ENCODE measurements at regions of chr2 and their contacts with region 1.

Region 1: DNA sequence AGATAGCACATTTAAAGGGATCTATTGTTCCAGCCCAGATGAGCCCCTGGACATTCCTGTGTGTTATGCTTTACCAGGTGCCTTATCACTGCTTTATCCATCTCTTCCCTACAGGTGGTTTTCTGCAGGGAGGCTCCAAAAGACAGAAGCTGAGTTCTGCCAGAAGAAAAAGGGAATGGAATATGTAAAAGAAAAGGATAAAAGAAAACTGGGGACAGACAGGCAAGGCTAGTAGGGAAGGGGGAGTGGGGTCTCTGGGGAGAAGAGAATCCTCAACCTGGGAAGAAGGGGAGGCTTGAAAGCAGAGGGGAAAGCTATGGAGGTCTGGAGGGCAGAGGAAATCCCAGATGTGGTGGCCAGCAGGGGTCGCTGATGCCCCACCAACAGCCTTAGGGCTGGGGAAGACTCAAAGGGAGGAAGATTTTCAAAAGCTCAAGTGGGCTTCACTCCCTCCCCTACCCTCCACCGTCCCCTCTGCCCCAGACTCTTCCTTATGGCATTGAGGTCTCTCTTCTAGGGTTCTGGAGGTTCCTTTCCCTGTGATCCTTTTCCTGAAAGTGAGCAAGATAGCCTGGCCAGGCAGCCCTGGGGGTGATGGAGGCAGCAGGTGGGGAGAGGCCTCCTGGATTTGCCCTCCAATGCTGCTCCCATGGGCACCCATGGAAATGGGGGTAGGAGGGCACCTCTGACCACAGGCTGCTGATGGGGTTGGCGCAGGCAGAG is 178.1 kb upstream of the PKDCC start:
- DNase-seq: peak; percentile 33 to 93
- H3K4me3 ChIP-seq: no peak overlapping the region
- H3K27ac ChIP-seq: no peak overlapping the region
- H3K4me1 ChIP-seq: peaks cover 4 to 18% (median 8%) of the 10 kb centered on the region in 4 experiments; a peak in 6 of 7 replicates
- H3K27me3 ChIP-seq: no peaks in the 10 kb centered on the region
- CTCF ChIP-seq: peak; percentile 87 to 94 (median 90)
- EP300 ChIP-seq: no peak
- POLR2A ChIP-seq: no peak
- RAD21 ChIP-seq: peak; percentile 98 to 99

Region 2: GRCh38 chr2:41743324-41743723 is 126.4 kb before region 1 on chr2:
- CTCF ChIA-PET with region 1: no interaction called
- POLR2A ChIA-PET with region 1: no interaction called
- DNase-seq: no peak
- H3K4me3 ChIP-seq: no peak overlapping the region
- H3K27ac ChIP-seq: no peak overlapping the region
- H3K4me1 ChIP-seq: no peaks in the 10 kb centered on the region
- H3K27me3 ChIP-seq: no peaks in the 10 kb centered on the region
- CTCF ChIP-seq: no peak
- EP300 ChIP-seq: no peak
- POLR2A ChIP-seq: no peak
- RAD21 ChIP-seq: no peak

Region 3: DNA sequence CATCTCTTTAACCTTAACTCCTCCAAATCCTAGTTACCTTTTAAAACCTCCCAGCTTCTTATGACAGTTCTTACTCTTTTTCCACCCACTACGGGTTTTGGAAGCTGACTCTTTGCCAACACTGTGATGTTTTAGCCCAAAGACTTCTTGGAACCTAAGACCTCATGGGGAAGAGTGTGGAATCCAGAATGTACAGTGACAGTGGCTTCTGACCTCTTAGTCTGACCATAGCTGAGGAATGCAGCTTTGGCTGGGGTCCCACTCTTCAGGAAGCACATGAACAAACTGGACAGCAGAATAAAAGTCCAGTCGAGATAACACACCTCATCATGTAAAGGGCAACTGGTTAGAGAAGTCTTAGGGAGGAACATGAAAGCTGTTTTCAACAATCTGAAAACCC is 17.1 kb after region 1 on chr2:
- CTCF ChIA-PET with region 1: interaction called, 41 read pairs
- POLR2A ChIA-PET with region 1: no interaction called
- DNase-seq: no peak
- H3K4me3 ChIP-seq: no peak overlapping the region
- H3K27ac ChIP-seq: no peak overlapping the region
- H3K4me1 ChIP-seq: no peaks in the 10 kb centered on the region
- H3K27me3 ChIP-seq: no peaks in the 10 kb centered on the region
- CTCF ChIP-seq: no peak
- EP300 ChIP-seq: no peak
- POLR2A ChIP-seq: no peak
- RAD21 ChIP-seq: no peak

Region 4: GRCh38 chr2:41947701-41948396 is 78.1 kb after region 1 on chr2:
- CTCF ChIA-PET with region 1: interaction called, 53 read pairs
- POLR2A ChIA-PET with region 1: no interaction called
- DNase-seq: peak in 1 of 2 experiments; percentile 66
- H3K4me3 ChIP-seq: peak overlapping the region in 2 of 4 experiments; percentile 24 to 36; a peak in 4 of 8 replicates
- H3K27ac ChIP-seq: peak overlapping the region; percentile 51; the same call in 1 of the 2 replicates
- H3K4me1 ChIP-seq: peaks cover 19 to 31% (median 23%) of the 10 kb centered on the region in 4 experiments; a peak in 6 of 7 replicates
- H3K27me3 ChIP-seq: no peaks in the 10 kb centered on the region
- CTCF ChIP-seq: no peak
- EP300 ChIP-seq: no peak
- POLR2A ChIP-seq: no peak
- RAD21 ChIP-seq: peak in 1 of 2 experiments; percentile 4; a peak in 1 of 4 replicates

Region 5: DNA sequence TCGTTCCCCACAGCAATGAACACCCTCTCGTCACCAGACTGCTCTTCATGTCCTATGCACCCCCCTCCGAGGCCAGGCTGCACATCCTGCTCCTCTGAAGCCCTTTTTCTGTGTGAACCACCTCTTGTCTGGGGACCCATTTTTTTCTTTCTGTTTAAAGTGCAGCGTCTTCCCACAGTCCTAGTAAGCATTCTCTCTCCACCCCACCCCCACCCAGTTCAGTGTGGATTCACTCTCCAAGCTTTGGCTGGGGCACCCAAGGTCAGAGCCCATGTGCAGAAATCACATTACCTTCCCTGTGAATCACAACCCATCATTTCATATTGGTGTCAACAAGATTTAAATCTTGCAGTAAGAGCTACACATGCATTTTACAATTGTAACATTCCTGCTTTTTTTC is 151.8 kb after region 1 on chr2:
- CTCF ChIA-PET with region 1: interaction called, 15 read pairs
- POLR2A ChIA-PET with region 1: no interaction called
- DNase-seq: no peak
- H3K4me3 ChIP-seq: no peak overlapping the region
- H3K27ac ChIP-seq: no peak overlapping the region
- H3K4me1 ChIP-seq: peaks cover 3 to 9% (median 6%) of the 10 kb centered on the region in 4 experiments; a peak in 6 of 7 replicates
- H3K27me3 ChIP-seq: no peaks in the 10 kb centered on the region
- CTCF ChIP-seq: no peak
- EP300 ChIP-seq: no peak
- POLR2A ChIP-seq: no peak
- RAD21 ChIP-seq: no peak

Region 6: DNA sequence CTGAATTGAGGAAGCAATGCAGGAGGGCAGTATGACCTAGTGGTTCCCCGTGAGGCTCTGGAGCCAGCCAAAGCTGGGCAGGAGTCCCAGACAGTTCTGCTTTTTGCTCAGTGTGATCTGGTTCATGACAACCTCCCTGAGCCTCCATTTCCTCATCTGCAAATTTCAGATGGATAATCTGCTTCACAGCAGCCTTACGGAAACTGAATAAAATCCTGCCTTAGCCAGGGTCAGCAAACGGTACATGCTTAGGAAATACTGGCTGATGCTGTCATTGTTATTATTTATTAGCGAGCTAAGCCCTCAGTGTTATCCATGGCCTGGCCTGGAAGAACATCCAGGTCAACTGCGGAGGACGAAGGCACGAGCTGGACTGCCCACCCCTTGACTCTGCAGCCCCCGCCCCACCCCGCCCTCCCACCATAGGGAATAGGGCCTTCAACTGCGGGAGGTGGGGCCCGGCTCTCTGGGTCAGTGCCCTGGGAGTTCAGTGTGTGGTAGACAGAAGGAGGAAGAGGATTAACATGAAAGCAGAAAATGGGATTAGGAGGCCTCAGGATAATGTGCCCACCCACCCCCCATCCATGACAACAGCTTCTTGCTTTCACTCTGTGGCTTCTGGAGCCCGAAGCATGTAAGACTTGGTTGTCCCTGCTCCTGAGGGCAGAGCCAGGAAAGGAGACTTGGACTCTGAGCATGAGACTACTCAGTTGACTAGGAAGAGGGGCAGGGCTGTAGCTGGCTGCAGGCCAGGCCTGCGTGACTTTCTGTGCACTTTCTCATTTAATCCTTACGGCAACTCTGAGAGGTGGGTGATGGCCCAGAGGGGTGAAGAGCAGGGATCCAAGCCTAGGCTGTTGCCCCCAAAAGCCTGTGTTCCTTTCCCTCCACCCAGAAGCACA is 191.3 kb after region 1 on chr2:
- CTCF ChIA-PET with region 1: interaction called, 157 read pairs
- POLR2A ChIA-PET with region 1: interaction called, 4 read pairs
- DNase-seq: no peak
- H3K4me3 ChIP-seq: no peak overlapping the region
- H3K27ac ChIP-seq: no peak overlapping the region; the same call in 1 of the 2 replicates
- H3K4me1 ChIP-seq: peaks cover 0 to 2% (median 0%) of the 10 kb centered on the region in 4 experiments; a peak in 2 of 7 replicates
- H3K27me3 ChIP-seq: no peaks in the 10 kb centered on the region; a peak in 1 of 7 replicates
- CTCF ChIP-seq: no peak
- EP300 ChIP-seq: no peak
- POLR2A ChIP-seq: no peak
- RAD21 ChIP-seq: no peak